Tibial artery (tissue), 4 donors: ENCODE measurements at regions of chr18 and their contacts with region 1.

Region 1: DNA sequence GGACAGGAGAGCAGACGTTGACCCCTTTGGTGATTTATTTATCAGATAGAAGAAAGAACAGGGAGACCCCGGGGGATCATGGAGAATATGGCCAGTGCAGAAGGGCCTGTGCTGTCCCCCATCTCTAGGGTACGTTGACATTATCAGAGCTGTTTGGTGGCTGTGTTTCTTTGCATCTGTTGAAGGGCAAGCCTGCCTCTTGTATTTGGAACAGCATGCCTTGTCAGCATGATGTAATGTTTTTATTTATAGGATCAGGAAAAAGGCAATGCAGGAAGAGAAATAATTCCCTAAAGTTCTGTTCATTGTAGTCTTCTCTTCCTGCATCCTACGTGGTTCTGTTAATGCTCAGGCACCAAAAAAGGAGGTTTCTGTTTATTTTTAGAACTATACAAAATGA is 49.8 kb upstream of the CABYR start:
- DNase-seq: no peak
- H3K4me3 ChIP-seq: no peak overlapping the region
- H3K27ac ChIP-seq: no peak overlapping the region
- H3K4me1 ChIP-seq: peaks cover 0 to 5% (median 0%) of the 10 kb centered on the region in 4 donors
- H3K27me3 ChIP-seq: no peaks in the 10 kb centered on the region
- CTCF ChIP-seq: no peak

Region 2: DNA sequence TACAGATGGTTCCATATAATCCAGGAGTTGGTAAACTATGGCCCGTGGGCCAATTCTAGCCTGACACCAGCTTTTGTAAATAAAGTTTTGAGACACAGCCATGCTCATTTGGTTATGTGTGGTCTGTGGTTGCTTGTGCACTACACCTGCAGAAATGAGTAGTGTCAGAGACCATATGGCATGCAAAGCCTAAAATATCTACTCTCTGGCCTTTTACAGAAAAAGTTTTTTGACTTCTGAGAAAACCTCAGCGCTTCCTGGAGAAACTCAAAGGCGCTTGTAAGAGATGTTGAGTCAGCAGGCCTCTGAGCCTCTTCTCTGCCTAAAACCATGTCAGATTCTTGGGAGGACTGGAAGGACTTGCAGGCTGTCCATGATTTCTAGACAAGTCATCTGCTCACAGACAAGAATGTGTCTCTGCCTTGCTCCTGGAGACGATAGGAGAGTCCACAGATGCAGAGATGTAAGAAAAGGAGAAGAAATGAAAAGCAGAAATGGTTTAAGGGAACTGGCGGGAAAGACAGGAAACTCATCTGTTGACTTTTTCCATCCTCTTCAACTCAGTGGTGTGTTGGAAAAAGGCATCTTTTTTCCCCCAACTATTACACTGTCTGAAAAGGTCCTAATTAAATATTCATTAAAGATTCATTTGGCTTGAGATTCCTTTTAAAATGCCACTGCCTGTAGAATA is 69.3 kb before region 1 on chr18:
- intact Hi-C with region 1: loop called (anchors 10 kb)
- DNase-seq: no peak
- H3K4me3 ChIP-seq: no peak overlapping the region
- H3K27ac ChIP-seq: no peak overlapping the region
- H3K4me1 ChIP-seq: peaks cover 0 to 13% (median 7%) of the 10 kb centered on the region in 4 donors
- H3K27me3 ChIP-seq: peaks cover 0 to 3% of the 10 kb centered on the region in 2 donors
- CTCF ChIP-seq: no peak

Region 3: GRCh38 chr18:24054130-24054529 is 34.9 kb before region 1 on chr18:
- intact Hi-C with region 1: no loop called
- DNase-seq: no peak
- H3K4me3 ChIP-seq: no peak overlapping the region
- H3K27ac ChIP-seq: peak overlapping the region in 1 of 2 donors; percentile 16
- H3K4me1 ChIP-seq: peaks cover 0 to 8% (median 0%) of the 10 kb centered on the region in 4 donors
- H3K27me3 ChIP-seq: no peaks in the 10 kb centered on the region
- CTCF ChIP-seq: no peak